ENCODE measurements at regions of chr7 and their contacts with region 1.

Region 1: DNA sequence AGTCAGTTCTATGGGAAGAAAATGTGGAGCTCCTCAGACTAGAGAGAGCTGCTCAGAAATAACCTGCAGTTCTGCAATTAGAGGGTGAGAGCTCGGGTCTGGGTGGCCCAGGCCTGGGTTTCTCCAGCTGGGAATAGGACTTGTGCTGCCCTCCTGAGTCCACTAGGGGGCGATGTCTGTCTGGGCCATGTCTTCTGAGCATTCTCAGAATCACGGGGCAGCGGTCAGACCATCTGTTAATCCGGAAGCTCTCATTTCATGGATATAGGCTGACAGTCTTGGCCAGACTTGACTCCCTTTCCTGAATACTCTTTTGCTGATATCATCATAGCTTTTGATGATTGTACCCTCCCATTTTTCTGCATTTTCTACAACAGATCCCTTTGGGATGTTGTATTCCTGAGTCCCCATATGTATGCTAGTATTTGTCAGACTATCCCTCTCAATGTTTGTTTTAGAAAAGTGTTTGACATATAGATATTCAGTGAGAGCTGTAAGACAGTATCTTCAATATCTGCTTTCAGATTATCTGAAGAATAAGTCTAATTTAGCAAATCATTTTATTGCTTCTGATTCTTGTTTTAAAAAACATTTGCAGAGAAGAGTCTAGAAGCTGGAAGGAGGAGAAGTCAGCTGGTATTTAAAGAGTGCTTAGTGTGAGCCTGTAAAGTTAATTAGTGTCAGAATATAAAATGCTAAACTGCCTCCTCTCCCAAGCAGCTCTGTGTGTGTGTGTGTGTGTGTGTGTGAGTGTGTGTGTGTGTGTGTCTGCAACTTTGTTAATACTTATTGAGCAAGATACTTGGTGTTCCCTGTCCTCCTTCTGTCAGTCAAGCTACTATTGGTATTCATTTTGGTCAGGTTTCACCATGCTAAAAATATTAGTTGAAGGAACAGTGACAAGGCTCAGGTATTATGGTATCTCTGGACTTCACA is 38.0 kb downstream of the STARD3NL start:
- DNase-seq: peak; percentile 75 to 87 (median 79)
- ATAC-seq: peak; percentile 89 to 91
- H3K4me3 ChIP-seq: no peak overlapping the region
- H3K27ac ChIP-seq: no peak overlapping the region
- H3K4me1 ChIP-seq: peaks cover 4% of the 10 kb centered on the region
- H3K27me3 ChIP-seq: no peaks in the 10 kb centered on the region

Region 2: GRCh38 chr7:38178004-38178694 is 37.9 kb before region 1 on chr7 and contains the start of gene STARD3NL:
- intact Hi-C with region 1: loop called in 1 of 4 experiments (anchors 5 kb)
- DNase-seq: peak; percentile 97 to 98 (median 98)
- ATAC-seq: peak; percentile 99
- H3K4me3 ChIP-seq: peak within 1 kb of the TSS; percentile 50
- H3K27ac ChIP-seq: peak within 1 kb of the TSS; percentile 93
- H3K4me1 ChIP-seq: no peaks in the 10 kb centered on the region
- H3K27me3 ChIP-seq: no peaks in the 10 kb centered on the region
- total RNA-seq, gene STARD3NL: 32.1 to 45.1 (median 33.6) TPM

Measured in right cardiac atrium (tissue), 5 donors.